ENCODE measurements at regions of chr1 and their contacts with region 1.

Region 1: DNA sequence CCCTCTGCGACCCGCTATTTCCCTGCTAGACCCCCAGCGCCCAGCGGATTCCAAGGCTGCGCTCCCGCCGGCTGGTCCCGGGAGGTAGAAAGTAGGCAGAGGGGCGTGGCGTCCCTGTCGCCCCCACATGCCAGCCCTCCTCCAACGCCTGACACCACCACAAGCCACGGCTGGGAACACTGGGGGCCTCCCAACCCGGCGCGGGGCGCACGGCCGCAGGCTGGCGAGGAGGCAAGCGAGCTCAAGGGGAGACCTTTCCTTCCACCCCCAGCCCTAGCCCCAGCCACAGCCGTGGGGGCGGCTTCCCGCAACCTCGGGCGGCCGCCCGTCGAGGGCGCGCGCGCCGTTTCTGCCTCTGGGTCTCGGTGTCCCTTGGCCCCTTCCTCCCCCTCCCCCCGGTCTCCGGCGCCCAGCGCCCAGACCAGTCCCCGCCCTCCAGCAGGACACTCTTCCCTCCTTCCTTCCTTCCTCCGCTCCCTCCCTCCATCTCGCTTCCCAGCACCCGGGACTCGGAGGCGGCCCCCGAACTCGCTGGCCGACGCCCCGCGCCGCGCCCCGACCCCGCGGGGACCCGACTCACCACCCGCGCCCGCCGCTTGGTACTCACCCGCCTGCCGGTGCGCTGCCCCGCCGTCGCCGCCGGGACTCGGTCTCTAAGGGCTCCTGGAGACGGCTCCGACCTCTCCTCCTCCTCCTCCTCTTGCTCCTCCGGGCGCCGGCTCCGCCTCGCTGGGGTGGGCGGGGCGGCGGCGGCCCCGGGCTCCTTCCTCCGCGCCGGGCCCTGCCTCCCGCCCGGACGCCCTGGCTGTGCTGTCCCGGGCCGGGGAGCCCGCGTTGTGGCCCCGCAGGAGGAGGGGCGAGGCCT is at the start of gene GNG12:
- DNase-seq: peak; percentile 73
- ATAC-seq: peak; percentile 89
- H3K4me3 ChIP-seq: peak within 1 kb of the TSS; percentile 93
- H3K27ac ChIP-seq: peak within 1 kb of the TSS; percentile 75
- H3K4me1 ChIP-seq: peaks cover 2% of the 10 kb centered on the region; the same call in 1 of the 2 replicates
- H3K27me3 ChIP-seq: no peaks in the 10 kb centered on the region
- CTCF ChIP-seq: no peak
- POLR2A ChIP-seq: peak; percentile 66
- RAD21 ChIP-seq: no peak
- total RNA-seq, gene GNG12: 132 and 233 TPM in 2 replicates

Region 2: GRCh38 chr1:67791686-67792475 is 41.1 kb before region 1 on chr1:
- CTCF ChIA-PET with region 1: no interaction called
- POLR2A ChIA-PET with region 1: no interaction called
- dilution Hi-C with region 1: no loop called
- in situ Hi-C with region 1: no loop called
- intact Hi-C with region 1: loop called (anchors 1 kb)
- DNase-seq: peak; percentile 93
- ATAC-seq: peak; percentile 76
- H3K4me3 ChIP-seq: no peak overlapping the region
- H3K27ac ChIP-seq: peak overlapping the region; percentile 93
- H3K4me1 ChIP-seq: peaks cover 35% of the 10 kb centered on the region
- H3K27me3 ChIP-seq: no peaks in the 10 kb centered on the region
- CTCF ChIP-seq: no peak
- POLR2A ChIP-seq: no peak
- RAD21 ChIP-seq: no peak

Region 3: GRCh38 chr1:67814121-67814772 is 18.7 kb before region 1 on chr1:
- CTCF ChIA-PET with region 1: interaction called, 4 read pairs
- POLR2A ChIA-PET with region 1: no interaction called
- dilution Hi-C with region 1: no loop called
- in situ Hi-C with region 1: no loop called
- intact Hi-C with region 1: loop called (anchors 2 kb)
- DNase-seq: no peak
- ATAC-seq: peak; percentile 51
- H3K4me3 ChIP-seq: no peak overlapping the region
- H3K27ac ChIP-seq: no peak overlapping the region; the same call in 1 of the 2 replicates
- H3K4me1 ChIP-seq: peaks cover 20% of the 10 kb centered on the region
- H3K27me3 ChIP-seq: no peaks in the 10 kb centered on the region
- CTCF ChIP-seq: no peak
- POLR2A ChIP-seq: no peak
- RAD21 ChIP-seq: no peak